Breast epithelium (tissue), 4 donors: ENCODE measurements at regions of chr2 and their contacts with region 1.

Region 1: GRCh38 chr2:61993444-61994024 is 88.1 kb downstream of the COMMD1 start:
- DNase-seq: no peak
- H3K4me3 ChIP-seq: no peak overlapping the region
- H3K27ac ChIP-seq: no peak overlapping the region
- H3K4me1 ChIP-seq: no peaks in the 10 kb centered on the region
- H3K27me3 ChIP-seq: no peaks in the 10 kb centered on the region
- CTCF ChIP-seq: peak; percentile 12 to 59 (median 53)
- POLR2A ChIP-seq: no peak

Region 2: GRCh38 chr2:61970807-61971556 is 22.6 kb before region 1 on chr2:
- intact Hi-C with region 1: loop called (anchors 1 kb)
- DNase-seq: peak in 1 of 2 donors; percentile 46
- H3K4me3 ChIP-seq: peak overlapping the region in 2 of 3 donors; percentile 40 to 55
- H3K27ac ChIP-seq: peak overlapping the region; percentile 63 to 80
- H3K4me1 ChIP-seq: no peaks in the 10 kb centered on the region
- H3K27me3 ChIP-seq: no peaks in the 10 kb centered on the region
- CTCF ChIP-seq: no peak
- POLR2A ChIP-seq: no peak

Region 3: DNA sequence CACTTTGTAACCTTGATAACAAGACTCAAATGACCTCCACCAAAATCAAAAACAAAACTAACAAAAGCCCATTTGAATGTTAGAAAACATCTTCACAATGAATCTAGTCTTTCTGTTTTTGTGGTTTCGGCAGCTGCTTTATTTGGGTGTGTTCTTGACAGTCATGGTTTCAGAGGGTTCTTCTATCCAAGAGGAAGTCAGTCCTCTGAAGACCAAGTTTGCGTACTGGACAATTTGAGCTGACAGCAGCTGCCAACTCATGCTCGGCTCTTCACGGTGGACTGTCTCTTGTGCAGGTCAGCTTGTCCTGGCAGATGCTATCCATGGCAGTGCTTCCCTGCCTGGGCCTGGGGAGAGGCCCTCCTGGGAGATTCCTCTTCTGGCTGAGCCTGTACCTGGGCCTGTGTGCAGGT is 421.5 kb after region 1 on chr2:
- intact Hi-C with region 1: loop called (anchors 2 kb)
- DNase-seq: no peak
- H3K4me3 ChIP-seq: no peak overlapping the region
- H3K27ac ChIP-seq: peak overlapping the region; percentile 54 to 67
- H3K4me1 ChIP-seq: peaks cover 12 to 14% of the 10 kb centered on the region in 2 donors
- H3K27me3 ChIP-seq: no peaks in the 10 kb centered on the region
- CTCF ChIP-seq: no peak
- POLR2A ChIP-seq: no peak